Vagina (tissue), 2 donors: ENCODE measurements at regions of chr13 and their contacts with region 1.

Region 1: GRCh38 chr13:21069561-21070004 is 8.2 kb upstream of the LATS2 start:
- DNase-seq: no peak
- H3K4me3 ChIP-seq: no peak overlapping the region
- H3K27ac ChIP-seq: peak overlapping the region; percentile 52
- H3K4me1 ChIP-seq: peaks cover 23% of the 10 kb centered on the region
- H3K27me3 ChIP-seq: no peaks in the 10 kb centered on the region
- CTCF ChIP-seq: no peak
- POLR2A ChIP-seq: no peak

Region 2: DNA sequence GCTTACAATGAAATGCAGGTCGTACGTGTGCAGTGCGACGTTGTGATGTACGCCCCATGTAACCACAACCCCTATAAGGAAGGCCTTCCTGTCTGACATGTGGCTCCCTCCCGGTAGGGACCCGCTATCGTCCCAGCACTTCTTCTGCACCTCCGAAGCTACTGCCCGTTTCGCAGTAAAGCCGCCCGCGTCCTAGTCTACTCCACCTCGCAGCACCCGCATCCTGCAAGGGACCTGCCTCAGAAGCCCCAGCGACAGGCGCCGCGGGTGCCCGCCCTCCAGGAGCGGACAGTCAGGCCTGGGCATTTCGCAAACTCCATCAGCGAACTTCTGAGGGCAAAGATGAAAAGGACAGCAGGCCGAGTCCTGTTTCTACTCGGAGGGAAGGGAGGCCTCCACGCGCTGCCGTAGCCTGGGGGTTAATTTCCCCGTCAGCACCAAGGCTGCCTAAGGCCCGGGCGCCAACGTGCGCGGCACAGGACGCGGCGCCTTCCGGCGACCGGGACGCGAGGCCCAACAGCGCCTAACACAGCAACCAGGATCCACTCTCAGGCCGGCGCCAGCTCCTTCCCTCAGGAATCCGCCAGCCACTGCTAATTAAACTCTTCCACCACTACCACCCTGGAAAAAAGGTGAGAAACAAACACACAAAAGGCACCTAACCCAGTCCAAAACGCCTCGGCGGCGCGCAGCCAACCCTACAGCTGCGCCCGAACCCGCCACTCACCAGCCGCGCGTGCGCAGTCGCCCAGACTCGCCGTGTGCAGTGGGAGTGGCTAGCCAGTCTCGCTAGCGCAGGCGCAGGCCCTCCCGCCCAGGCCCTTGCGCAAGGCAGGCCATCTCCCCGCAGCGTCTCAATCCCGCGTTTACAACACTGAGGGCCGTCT is 296.1 kb before region 1 on chr13 and contains the start of gene EEF1AKMT1:
- intact Hi-C with region 1: no loop called
- DNase-seq: peak in 1 of 2 donors; percentile 93
- H3K4me3 ChIP-seq: peak within 1 kb of the TSS; percentile 64 to 68
- H3K27ac ChIP-seq: peak within 1 kb of the TSS; percentile 84
- H3K4me1 ChIP-seq: peaks cover 7% of the 10 kb centered on the region
- H3K27me3 ChIP-seq: no peaks in the 10 kb centered on the region
- CTCF ChIP-seq: peak in 1 of 3 experiments; percentile 8
- POLR2A ChIP-seq: peak in 1 of 2 donors; percentile 92
- total RNA-seq, gene EEF1AKMT1: 6.9 TPM

Region 3: GRCh38 chr13:21014502-21015170 is 54.9 kb before region 1 on chr13:
- intact Hi-C with region 1: loop called (anchors 5 kb)
- DNase-seq: no peak
- H3K4me3 ChIP-seq: no peak overlapping the region
- H3K27ac ChIP-seq: peak overlapping the region; percentile 79
- H3K4me1 ChIP-seq: peaks cover 65% of the 10 kb centered on the region
- H3K27me3 ChIP-seq: no peaks in the 10 kb centered on the region
- CTCF ChIP-seq: no peak
- POLR2A ChIP-seq: no peak

Region 4: DNA sequence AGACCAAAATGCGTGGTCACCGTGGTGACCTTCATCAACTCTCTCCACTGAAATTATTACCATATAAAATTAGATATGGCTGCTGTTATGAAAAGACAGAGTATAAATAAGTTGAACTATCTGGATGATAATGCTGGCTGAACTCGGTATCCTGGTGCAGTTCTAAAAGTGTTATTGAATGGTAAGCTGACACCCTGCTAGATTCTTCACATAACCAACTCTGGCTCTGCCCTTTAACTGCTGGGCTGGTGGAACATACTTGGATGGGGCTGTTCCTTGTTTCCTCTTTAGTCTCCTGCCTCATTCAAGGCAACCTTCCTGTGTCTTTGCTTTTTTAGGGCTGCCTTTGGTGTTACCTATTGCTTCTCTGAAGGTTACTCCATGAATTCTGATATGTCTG is 708.2 kb after region 1 on chr13:
- intact Hi-C with region 1: no loop called
- DNase-seq: no peak
- H3K4me3 ChIP-seq: no peak overlapping the region
- H3K27ac ChIP-seq: no peak overlapping the region
- H3K4me1 ChIP-seq: no peaks in the 10 kb centered on the region
- H3K27me3 ChIP-seq: no peaks in the 10 kb centered on the region
- CTCF ChIP-seq: no peak
- POLR2A ChIP-seq: no peak